OCI-LY7 (cell line): ENCODE measurements at regions of chr10 and their contacts with region 1.

Region 1: DNA sequence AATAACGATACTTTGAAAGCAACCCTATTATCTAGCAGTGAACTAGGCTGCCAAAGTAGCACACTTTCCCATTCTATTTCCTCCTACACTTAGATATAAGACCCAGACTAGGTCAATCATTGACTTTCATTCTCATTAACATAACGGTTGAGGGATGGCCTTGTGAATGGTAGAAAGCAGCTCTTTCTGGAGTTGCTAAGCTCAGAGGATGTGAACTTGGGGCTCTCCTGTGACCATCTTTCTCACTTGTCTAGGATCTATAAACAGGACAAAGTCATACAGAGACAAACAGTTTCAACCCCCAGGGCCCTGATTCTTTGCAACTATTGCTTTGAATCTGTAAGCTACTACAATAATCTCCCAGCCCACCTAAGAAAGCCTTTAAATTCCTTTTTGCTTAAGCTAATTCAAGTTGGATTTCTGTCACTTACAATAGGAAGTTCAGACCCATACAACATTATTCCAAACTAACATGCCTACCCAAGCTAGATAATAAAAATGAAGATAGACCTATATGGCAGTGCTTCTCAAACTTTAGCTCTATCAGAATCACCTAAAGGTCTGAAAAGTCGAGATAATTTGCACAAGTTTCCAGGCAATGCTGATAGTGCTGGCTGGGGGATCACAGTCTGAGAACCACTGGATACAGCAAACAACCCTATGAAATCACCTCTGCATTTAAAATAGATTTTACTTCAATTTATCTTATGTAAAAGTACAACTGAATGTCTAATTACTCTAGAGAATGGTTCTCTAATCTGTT is 16.7 kb downstream of the P4HA1 start:
- DNase-seq: no peak
- H3K4me3 ChIP-seq: no peak overlapping the region
- H3K27ac ChIP-seq: no peak overlapping the region
- H3K4me1 ChIP-seq: peaks cover 10% of the 10 kb centered on the region
- CTCF ChIP-seq: no peak

Region 2: GRCh38 chr10:72981882-72982529 is 98.0 kb before region 1 on chr10:
- CTCF ChIA-PET with region 1: no interaction called
- POLR2A ChIA-PET with region 1: no interaction called
- intact Hi-C with region 1: no loop called
- DNase-seq: no peak
- H3K4me3 ChIP-seq: no peak overlapping the region
- H3K27ac ChIP-seq: no peak overlapping the region
- H3K4me1 ChIP-seq: no peaks in the 10 kb centered on the region
- CTCF ChIP-seq: no peak

Region 3: GRCh38 chr10:73060738-73061635 is 19.0 kb before region 1 on chr10:
- CTCF ChIA-PET with region 1: no interaction called
- POLR2A ChIA-PET with region 1: interaction called, 5 read pairs
- intact Hi-C with region 1: loop called (anchors 1 kb)
- DNase-seq: peak; percentile 48
- H3K4me3 ChIP-seq: no peak overlapping the region
- H3K27ac ChIP-seq: no peak overlapping the region
- H3K4me1 ChIP-seq: peaks cover 4% of the 10 kb centered on the region
- CTCF ChIP-seq: peak; percentile 90